GM12878 (cell line): ENCODE measurements at regions of chr6 and their contacts with region 1.

Region 1: GRCh38 chr6:14660806-14661579 is 543.4 kb downstream of the CD83 start:
- DNase-seq: peak; percentile 47
- ATAC-seq: peak; percentile 79
- H3K4me3 ChIP-seq: no peak overlapping the region; the same call in 1 of the 2 replicates
- H3K27ac ChIP-seq: no peak overlapping the region
- H3K4me1 ChIP-seq: peaks cover 33% of the 10 kb centered on the region
- H3K27me3 ChIP-seq: peaks cover 0 to 3% of the 10 kb centered on the region in 2 experiments; a peak in 2 of 4 replicates
- CTCF ChIP-seq: no peak
- EP300 ChIP-seq: 0 out of 4 replicates have a peak, but pooled peaks of 1 of the 2 experiments have one; percentile 11
- POLR2A ChIP-seq: no peak
- RAD21 ChIP-seq: no peak

Region 2: GRCh38 chr6:14638906-14639761 is 21.9 kb before region 1 on chr6:
- CTCF ChIA-PET with region 1: interaction called, 5 read pairs
- POLR2A ChIA-PET with region 1: interaction called, 7 read pairs
- RAD21 ChIA-PET with region 1: interaction called, 18 read pairs
- SMC1A ChIA-PET with region 1: interaction called, 26 read pairs
- in situ Hi-C with region 1: no loop called
- intact Hi-C with region 1: no loop called
- DNase-seq: peak; percentile 36
- ATAC-seq: peak; percentile 77
- H3K4me3 ChIP-seq: 0 out of 2 replicates have a peak overlapping the region, but pooled peaks have one; percentile 14
- H3K27ac ChIP-seq: no peak overlapping the region
- H3K4me1 ChIP-seq: peaks cover 41% of the 10 kb centered on the region
- H3K27me3 ChIP-seq: no peaks in the 10 kb centered on the region
- CTCF ChIP-seq: no peak
- EP300 ChIP-seq: peak in 1 of 2 experiments; percentile 86; a peak in 2 of 4 replicates
- POLR2A ChIP-seq: no peak
- RAD21 ChIP-seq: no peak

Region 3: DNA sequence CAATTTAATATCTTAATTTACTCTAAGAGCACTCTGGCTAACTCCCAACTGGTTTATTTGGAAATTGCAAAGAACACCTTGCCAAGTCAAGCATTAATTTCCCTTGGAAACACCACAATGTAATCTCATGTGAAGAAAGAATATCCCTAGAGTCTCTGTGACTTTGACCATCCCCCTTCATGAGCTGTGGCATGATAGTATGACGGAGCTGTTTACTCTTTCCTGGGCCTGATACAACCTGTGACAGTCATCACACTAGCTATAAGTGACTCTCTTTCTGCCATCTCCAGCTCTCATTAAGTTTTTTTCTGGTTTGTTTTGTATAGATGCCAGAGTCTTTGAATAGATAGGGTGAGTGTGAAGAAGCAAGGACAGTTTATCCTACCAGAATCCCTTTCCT is 114.5 kb after region 1 on chr6:
- CTCF ChIA-PET with region 1: no interaction called
- POLR2A ChIA-PET with region 1: no interaction called
- RAD21 ChIA-PET with region 1: no interaction called
- SMC1A ChIA-PET with region 1: no interaction called
- in situ Hi-C with region 1: no loop called
- intact Hi-C with region 1: no loop called
- DNase-seq: no peak
- ATAC-seq: no peak
- H3K4me3 ChIP-seq: no peak overlapping the region
- H3K27ac ChIP-seq: no peak overlapping the region
- H3K4me1 ChIP-seq: no peaks in the 10 kb centered on the region
- H3K27me3 ChIP-seq: no peaks in the 10 kb centered on the region
- CTCF ChIP-seq: no peak
- EP300 ChIP-seq: no peak
- POLR2A ChIP-seq: no peak
- RAD21 ChIP-seq: no peak

Region 4: GRCh38 chr6:14871221-14871620 is 210.2 kb after region 1 on chr6:
- CTCF ChIA-PET with region 1: no interaction called
- POLR2A ChIA-PET with region 1: no interaction called
- RAD21 ChIA-PET with region 1: interaction called, 3 read pairs
- SMC1A ChIA-PET with region 1: no interaction called
- in situ Hi-C with region 1: no loop called
- intact Hi-C with region 1: loop called (anchors 5 kb)
- DNase-seq: no peak
- ATAC-seq: no peak
- H3K4me3 ChIP-seq: no peak overlapping the region
- H3K27ac ChIP-seq: no peak overlapping the region
- H3K4me1 ChIP-seq: peaks cover 34% of the 10 kb centered on the region
- H3K27me3 ChIP-seq: no peaks in the 10 kb centered on the region
- CTCF ChIP-seq: no peak
- EP300 ChIP-seq: no peak
- POLR2A ChIP-seq: no peak
- RAD21 ChIP-seq: no peak